ENCODE measurements at regions of chr3 and their contacts with region 1.

Region 1: DNA sequence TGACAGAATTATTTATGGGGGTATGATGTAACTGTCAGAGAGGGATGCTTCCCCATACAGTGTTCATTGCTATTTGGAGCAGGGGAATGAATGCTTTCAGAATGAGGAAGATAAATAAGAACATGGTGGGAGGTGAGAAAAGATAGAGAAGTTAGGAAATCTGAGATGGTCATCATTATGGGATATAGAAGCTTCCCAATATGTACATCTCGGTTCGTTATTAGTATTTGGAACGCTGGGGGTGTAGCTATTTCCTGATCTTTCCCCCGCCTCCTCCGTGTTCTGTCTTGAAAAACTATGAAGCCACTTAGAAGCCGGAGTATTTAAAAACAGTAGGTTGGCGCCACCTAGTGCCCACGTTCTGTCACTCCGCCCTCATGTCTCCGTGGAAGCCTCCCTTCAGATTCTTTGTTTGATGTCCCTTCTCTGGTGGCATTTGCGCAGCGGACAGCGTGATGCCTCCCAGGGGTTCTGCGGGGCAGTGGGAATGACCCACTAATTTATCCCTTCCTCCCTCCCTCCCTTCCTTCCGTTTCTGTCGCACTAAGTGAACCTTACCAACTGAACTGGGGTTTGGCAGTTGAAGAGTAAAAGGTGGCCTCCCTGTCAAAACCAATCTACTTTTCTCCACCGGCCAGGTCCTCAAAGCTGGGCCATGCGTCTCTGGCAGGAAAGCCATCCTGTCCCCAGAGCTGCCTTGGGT is 184.5 kb downstream of the FEZF2 start:
- DNase-seq: peak in 1 of 2 donors; percentile 87
- H3K4me3 ChIP-seq: peak overlapping the region; percentile 4 to 30
- H3K27ac ChIP-seq: peak overlapping the region in 1 of 2 donors; percentile 54
- H3K4me1 ChIP-seq: peaks cover 0 to 18% of the 10 kb centered on the region in 2 donors
- H3K27me3 ChIP-seq: no peaks in the 10 kb centered on the region
- CTCF ChIP-seq: peak; percentile 76 to 79 (median 77)

Region 2: DNA sequence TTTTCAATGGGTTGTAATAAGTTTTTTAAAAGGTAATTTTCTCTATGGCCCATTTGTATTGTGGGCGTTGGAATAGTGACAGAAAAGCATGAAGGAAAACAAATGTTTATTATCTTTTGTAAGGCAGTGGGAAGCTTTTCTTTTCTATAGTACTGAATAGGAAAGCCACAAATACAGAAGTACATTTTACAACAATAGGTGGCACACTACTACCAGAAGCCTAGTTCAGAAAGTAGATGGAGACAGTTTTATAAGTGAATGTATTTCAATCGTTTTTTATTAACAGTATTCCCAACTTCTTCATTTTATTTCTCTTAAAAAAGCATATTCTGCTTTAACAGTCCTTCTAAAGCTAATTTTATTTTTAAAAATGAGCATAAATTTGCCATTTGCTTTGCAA is 330.8 kb before region 1 on chr3:
- intact Hi-C with region 1: loop called (anchors 1 kb)
- DNase-seq: no peak
- H3K4me3 ChIP-seq: no peak overlapping the region
- H3K27ac ChIP-seq: no peak overlapping the region
- H3K4me1 ChIP-seq: peaks cover 0 to 29% of the 10 kb centered on the region in 2 donors
- H3K27me3 ChIP-seq: no peaks in the 10 kb centered on the region
- CTCF ChIP-seq: peak in 2 of 3 experiments; percentile 21 to 60

Region 3: GRCh38 chr3:61956236-61956635 is 232.6 kb before region 1 on chr3:
- intact Hi-C with region 1: loop called (anchors 5 kb)
- DNase-seq: no peak
- H3K4me3 ChIP-seq: peak overlapping the region in 1 of 2 donors; percentile 19
- H3K27ac ChIP-seq: peak overlapping the region; percentile 20 to 60
- H3K4me1 ChIP-seq: peaks cover 0 to 27% of the 10 kb centered on the region in 2 donors
- H3K27me3 ChIP-seq: no peaks in the 10 kb centered on the region
- CTCF ChIP-seq: no peak

Region 4: DNA sequence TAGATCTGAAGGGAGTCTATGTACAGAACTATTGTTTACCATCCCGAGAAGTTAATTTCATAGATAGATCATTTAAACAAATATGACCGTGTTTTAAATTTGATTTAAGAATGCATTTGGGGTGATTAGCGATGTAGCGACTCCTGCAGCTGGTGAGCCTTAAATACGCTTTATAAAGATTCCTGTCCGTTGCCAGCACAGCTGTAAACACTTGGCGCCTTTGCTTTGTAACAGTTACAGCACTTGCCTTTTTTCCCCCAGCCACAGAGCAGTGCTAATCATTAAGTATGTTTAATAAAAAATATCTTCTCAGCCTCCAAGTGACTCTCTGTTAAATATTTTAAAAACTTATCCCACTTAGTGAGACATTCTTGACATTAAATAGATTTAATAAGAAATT is 149.2 kb before region 1 on chr3:
- intact Hi-C with region 1: loop called (anchors 10 kb)
- DNase-seq: no peak
- H3K4me3 ChIP-seq: no peak overlapping the region
- H3K27ac ChIP-seq: peak overlapping the region in 1 of 2 donors; percentile 59
- H3K4me1 ChIP-seq: peaks cover 0 to 12% of the 10 kb centered on the region in 2 donors
- H3K27me3 ChIP-seq: no peaks in the 10 kb centered on the region
- CTCF ChIP-seq: no peak

Region 5: DNA sequence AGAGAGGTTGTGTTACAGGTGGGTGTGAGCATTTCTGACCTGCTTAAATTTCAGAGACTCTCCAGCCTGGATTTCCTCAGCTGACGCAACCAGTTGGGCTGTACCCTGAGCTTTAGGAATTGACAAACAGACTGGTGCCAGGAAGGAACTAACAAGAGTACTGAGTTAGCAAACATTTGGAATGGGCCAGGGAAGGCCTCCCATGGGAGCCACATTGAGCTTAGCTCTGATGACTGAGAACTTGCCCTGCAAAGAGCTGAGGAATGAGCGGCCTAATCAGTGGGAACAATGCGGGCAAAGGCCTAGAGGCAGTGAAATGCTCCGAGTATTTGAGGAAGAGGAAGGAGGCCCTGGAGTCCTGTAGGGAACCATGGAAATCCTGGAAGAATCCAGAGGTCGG is 69.7 kb before region 1 on chr3:
- intact Hi-C with region 1: no loop called
- DNase-seq: peak in 1 of 2 donors; percentile 81
- H3K4me3 ChIP-seq: no peak overlapping the region
- H3K27ac ChIP-seq: peak overlapping the region; percentile 54 to 58
- H3K4me1 ChIP-seq: peaks cover 3 to 31% of the 10 kb centered on the region in 2 donors
- H3K27me3 ChIP-seq: no peaks in the 10 kb centered on the region
- CTCF ChIP-seq: no peak

Region 6: GRCh38 chr3:62139936-62140335 is 48.9 kb before region 1 on chr3:
- intact Hi-C with region 1: loop called (anchors 5 kb)
- DNase-seq: peak in 1 of 2 donors; percentile 85
- H3K4me3 ChIP-seq: no peak overlapping the region
- H3K27ac ChIP-seq: peak overlapping the region; percentile 72 to 77
- H3K4me1 ChIP-seq: peaks cover 0 to 32% of the 10 kb centered on the region in 2 donors
- H3K27me3 ChIP-seq: no peaks in the 10 kb centered on the region
- CTCF ChIP-seq: no peak

Region 7: DNA sequence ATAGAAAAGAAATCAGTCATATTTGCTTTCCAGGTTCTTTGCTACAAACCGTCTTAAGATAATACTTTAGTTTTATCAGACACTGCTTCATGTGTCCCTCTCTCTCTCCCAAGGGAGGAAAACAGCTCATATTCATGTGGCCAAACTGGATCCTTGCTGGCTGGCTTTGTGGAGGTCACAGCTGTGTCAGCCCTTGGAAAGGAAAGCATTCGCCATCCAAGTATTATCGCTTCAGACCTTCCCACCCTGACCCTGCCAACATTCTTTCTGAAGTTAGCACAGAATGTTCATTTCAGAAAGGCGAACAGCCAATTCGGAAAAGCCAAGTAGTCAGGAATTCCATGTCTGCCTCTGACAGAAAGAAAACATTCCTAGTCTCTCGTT is 29.1 kb before region 1 on chr3:
- intact Hi-C with region 1: no loop called
- DNase-seq: peak in 1 of 2 donors; percentile 93
- H3K4me3 ChIP-seq: no peak overlapping the region
- H3K27ac ChIP-seq: peak overlapping the region; percentile 86 to 90
- H3K4me1 ChIP-seq: peaks cover 14 to 68% of the 10 kb centered on the region in 2 donors
- H3K27me3 ChIP-seq: no peaks in the 10 kb centered on the region
- CTCF ChIP-seq: no peak